ENCODE measurements at regions of chr10 and their contacts with region 1.

Region 1: DNA sequence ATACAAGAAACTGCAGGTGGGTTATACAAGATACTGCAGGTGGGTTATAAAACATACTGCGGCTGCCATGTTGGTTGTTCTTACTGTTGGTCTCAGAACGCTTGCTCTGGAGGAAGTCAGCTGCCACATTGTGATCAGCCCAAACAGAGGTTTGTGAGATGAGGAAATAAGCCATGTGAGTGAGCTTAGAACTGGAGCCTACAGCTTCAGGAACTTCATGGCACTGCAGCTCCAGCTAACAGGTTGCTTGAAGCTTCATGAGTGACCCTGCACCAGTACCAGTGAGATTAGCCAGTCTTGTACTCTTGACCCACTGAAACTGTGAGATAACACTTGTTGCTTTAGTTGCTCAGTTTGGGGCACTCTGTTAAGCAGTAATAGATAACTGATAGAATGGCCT is 74.5 kb upstream of the PRKCQ start:
- DNase-seq: no peak

Region 2: DNA sequence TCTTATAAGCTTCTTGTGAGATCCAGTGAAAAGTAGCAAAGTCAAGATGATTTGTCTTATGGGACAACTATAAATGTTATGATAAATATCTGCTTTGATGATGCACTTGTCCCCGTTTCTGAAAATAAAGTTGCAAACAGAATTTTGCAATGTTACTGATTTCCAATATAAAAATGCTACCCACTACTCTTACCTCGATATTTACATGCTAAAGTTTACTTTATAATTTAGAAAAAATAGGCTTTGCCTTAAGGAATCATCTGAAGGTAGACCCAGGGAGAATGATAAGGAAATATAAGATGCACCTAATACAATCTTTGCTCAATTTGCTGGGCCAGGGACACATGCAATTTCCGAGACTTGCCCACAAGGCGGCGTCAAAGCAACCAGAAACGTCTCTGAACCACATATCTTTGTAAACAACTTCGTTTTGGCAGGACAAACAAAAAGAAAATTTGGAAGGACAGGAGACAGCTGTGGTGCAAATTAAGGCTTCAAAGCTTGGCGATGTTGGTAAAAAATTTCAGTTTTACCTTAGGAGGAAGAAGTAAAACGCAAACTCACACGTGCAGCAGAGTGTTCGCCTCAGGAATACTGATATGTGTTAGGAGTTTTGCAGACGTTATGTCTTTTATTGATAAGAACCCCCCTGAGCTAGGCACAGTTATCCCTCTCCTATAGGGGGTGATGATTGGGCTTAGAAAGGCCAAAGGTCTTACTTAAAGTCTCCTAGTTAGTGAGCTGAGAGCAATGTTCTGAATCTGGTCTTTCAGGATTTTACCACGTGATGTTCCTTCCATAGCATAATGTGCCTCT is 208.9 kb before region 1 on chr10:
- intact Hi-C with region 1: loop called (anchors 10 kb)
- DNase-seq: peak; percentile 21 to 90 (median 76)

Region 3: GRCh38 chr10:6478722-6479121 is 175.8 kb before region 1 on chr10:
- intact Hi-C with region 1: no loop called
- DNase-seq: no peak

Region 4: DNA sequence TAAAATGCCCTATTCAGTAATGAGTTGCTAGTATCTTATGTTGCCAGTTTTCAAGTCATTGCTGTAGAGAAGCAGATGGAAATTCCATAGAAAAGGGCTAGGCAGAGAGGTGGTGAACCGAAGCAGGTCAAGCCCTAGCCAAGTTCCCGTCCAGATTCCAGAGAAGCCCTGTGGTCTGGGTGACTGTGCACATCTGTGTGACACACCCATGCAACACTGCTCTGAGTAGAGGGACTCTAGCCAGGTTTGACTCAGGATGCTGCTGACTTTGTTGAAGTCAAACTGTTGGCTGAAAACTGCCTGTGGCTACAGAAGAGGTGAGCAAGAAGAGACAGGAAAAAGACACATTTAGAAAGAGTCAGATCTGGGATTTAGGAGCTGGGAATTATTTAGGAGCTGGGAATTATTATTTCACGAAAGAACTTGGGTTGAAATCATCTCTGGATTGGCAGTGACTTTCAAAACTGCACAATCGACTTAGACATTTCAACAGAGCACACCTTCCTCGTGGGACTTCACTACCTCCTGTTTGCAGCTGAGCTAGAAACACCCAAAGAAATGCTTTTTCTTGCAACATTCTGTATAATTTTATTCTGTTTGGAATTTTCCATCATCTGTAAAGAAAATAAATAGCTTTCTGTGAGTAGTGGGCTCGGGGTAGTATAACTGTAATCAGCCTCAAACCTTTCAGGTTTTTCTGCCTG is 74.7 kb after region 1 on chr10:
- intact Hi-C with region 1: no loop called
- DNase-seq: no peak

Region 5: GRCh38 chr10:6778992-6779701 is 124.6 kb after region 1 on chr10:
- intact Hi-C with region 1: no loop called
- DNase-seq: peak in 41 of 42 donors; percentile 16 to 88 (median 61)

Measured in head of caudate nucleus (tissue), 42 donors.